ENCODE measurements at regions of chr3 and their contacts with region 1.

Region 1: GRCh38 chr3:98602078-98602678 is 8.8 kb upstream of the CPOX start:
- DNase-seq: peak; percentile 76
- H3K4me3 ChIP-seq: no peak overlapping the region
- H3K27ac ChIP-seq: no peak overlapping the region
- H3K4me1 ChIP-seq: no peaks in the 10 kb centered on the region
- H3K27me3 ChIP-seq: no peaks in the 10 kb centered on the region
- CTCF ChIP-seq: peak; percentile 60 to 74
- POLR2A ChIP-seq: no peak

Region 2: GRCh38 chr3:97810779-97811390 is 791.3 kb before region 1 on chr3:
- CTCF ChIA-PET with region 1: no interaction called
- POLR2A ChIA-PET with region 1: no interaction called
- dilution Hi-C with region 1: no loop called
- intact Hi-C with region 1: no loop called
- DNase-seq: no peak
- H3K4me3 ChIP-seq: no peak overlapping the region
- H3K27ac ChIP-seq: no peak overlapping the region
- H3K4me1 ChIP-seq: no peaks in the 10 kb centered on the region
- H3K27me3 ChIP-seq: no peaks in the 10 kb centered on the region
- CTCF ChIP-seq: no peak
- POLR2A ChIP-seq: no peak

Region 3: GRCh38 chr3:98367467-98368246 is 234.5 kb before region 1 on chr3:
- CTCF ChIA-PET with region 1: no interaction called
- POLR2A ChIA-PET with region 1: no interaction called
- dilution Hi-C with region 1: no loop called
- intact Hi-C with region 1: no loop called
- DNase-seq: no peak
- H3K4me3 ChIP-seq: no peak overlapping the region
- H3K27ac ChIP-seq: no peak overlapping the region
- H3K4me1 ChIP-seq: no peaks in the 10 kb centered on the region
- H3K27me3 ChIP-seq: no peaks in the 10 kb centered on the region
- CTCF ChIP-seq: no peak
- POLR2A ChIP-seq: no peak

Region 4: GRCh38 chr3:98657457-98657856 is 55.3 kb after region 1 on chr3:
- CTCF ChIA-PET with region 1: interaction called, 10 read pairs
- POLR2A ChIA-PET with region 1: no interaction called
- dilution Hi-C with region 1: no loop called
- intact Hi-C with region 1: no loop called
- DNase-seq: no peak
- H3K4me3 ChIP-seq: no peak overlapping the region
- H3K27ac ChIP-seq: no peak overlapping the region
- H3K4me1 ChIP-seq: peaks cover 7% of the 10 kb centered on the region
- H3K27me3 ChIP-seq: peaks cover 0 to 4% of the 10 kb centered on the region in 2 experiments
- CTCF ChIP-seq: peak in 1 of 2 donors; percentile 4
- POLR2A ChIP-seq: no peak

Region 5: GRCh38 chr3:98763076-98763475 is 160.9 kb after region 1 on chr3 and contains the start of gene ST3GAL6:
- CTCF ChIA-PET with region 1: interaction called, 11 read pairs
- POLR2A ChIA-PET with region 1: no interaction called
- dilution Hi-C with region 1: no loop called
- intact Hi-C with region 1: no loop called
- DNase-seq: peak; percentile 85
- H3K4me3 ChIP-seq: peak within 1 kb of the TSS in 1 of 3 experiments; percentile 9
- H3K27ac ChIP-seq: peak within 1 kb of the TSS; percentile 66
- H3K4me1 ChIP-seq: peaks cover 66% of the 10 kb centered on the region
- H3K27me3 ChIP-seq: no peaks in the 10 kb centered on the region
- CTCF ChIP-seq: no peak
- POLR2A ChIP-seq: no peak
- total RNA-seq, gene ST3GAL6: 17.7 and 35.9 TPM in 2 replicates

Region 6: DNA sequence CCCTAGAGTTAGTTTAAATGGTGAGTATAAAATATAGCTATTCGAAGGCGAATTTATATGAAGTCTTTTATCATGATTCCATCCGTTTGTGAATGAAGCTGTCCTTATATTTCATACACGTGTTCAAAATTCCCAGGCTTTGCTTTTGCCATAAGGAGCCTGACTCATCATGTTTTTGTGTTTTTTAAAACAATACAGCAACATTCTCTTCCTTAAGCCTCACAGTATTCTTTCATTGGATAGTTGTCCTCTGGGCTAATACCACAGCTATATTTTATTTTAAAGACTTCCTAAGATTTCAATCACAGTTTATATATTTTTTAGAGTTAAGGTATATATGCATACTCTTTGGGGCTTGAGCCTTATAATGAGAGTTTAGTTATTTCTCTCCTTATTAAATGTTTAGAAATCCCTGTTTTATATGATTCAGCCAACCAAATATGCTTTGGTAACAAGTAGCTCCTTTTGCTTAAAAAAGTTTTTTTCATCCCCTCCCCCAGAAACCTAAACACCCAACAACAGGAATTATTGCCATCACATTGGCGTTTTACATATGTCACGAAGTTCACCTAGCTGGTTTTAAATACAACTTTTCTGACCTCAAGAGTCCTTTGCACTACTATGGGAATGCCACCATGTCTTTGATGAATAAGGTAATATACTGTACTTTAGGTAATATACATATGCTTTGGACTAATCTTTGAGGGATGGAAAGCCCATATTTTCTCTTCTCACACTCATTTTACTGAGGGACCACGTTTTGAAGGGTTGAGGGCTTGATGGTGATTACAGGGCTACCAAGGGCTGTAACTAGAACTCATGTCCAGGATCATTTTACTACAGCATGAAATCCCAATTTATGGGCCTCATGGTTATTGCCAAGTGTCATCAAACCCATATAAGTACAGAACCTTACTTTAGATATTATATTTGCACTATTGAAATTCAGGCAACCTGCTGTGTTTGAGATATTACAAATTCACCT is 189.5 kb after region 1 on chr3:
- CTCF ChIA-PET with region 1: interaction called, 63 read pairs
- POLR2A ChIA-PET with region 1: no interaction called
- dilution Hi-C with region 1: no loop called
- intact Hi-C with region 1: loop called (anchors 5 kb)
- DNase-seq: peak; percentile 82
- H3K4me3 ChIP-seq: no peak overlapping the region
- H3K27ac ChIP-seq: peak overlapping the region; percentile 2
- H3K4me1 ChIP-seq: peaks cover 20% of the 10 kb centered on the region
- H3K27me3 ChIP-seq: no peaks in the 10 kb centered on the region
- CTCF ChIP-seq: no peak
- POLR2A ChIP-seq: no peak

Region 7: DNA sequence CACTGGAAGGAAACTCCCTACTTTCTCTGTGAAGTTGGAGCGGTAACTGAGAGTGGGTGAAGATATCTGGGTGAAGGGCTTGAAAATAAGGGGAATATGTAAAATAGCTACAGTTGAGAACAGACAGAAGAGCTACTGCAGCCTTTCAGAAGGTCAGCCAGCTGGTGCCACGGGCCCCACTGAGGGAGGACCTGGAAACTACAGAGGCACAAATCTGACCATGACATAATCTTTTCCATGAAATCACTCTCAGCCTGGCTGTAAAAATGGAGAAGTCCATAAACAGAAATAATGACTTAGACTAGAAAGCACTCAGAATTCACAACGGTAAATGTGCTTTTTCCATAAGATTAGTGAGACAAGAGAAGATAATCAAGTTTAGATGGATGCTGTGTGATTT is 207.4 kb after region 1 on chr3:
- CTCF ChIA-PET with region 1: interaction called, 202 read pairs
- POLR2A ChIA-PET with region 1: no interaction called
- dilution Hi-C with region 1: loop called (anchors 25 kb)
- intact Hi-C with region 1: loop called (anchors 1 kb)
- DNase-seq: peak; percentile 68
- H3K4me3 ChIP-seq: no peak overlapping the region
- H3K27ac ChIP-seq: no peak overlapping the region
- H3K4me1 ChIP-seq: peaks cover 3% of the 10 kb centered on the region
- H3K27me3 ChIP-seq: no peaks in the 10 kb centered on the region
- CTCF ChIP-seq: no peak
- POLR2A ChIP-seq: no peak

Measured in endothelial cell of umbilical vein (primary cell).